ENCODE measurements at regions of chr11 and their contacts with region 1.

Region 1: GRCh38 chr11:57456960-57457642 is 3.2 kb upstream of the RTN4RL2 start:
- DNase-seq: peak; percentile 59 to 72 (median 62)
- H3K4me3 ChIP-seq: peak overlapping the region in 1 of 2 donors; percentile 3
- H3K4me3 Mint-ChIP-seq: peak overlapping the region; percentile 60 to 93 (median 70)
- H3K27ac ChIP-seq: no peak overlapping the region
- H3K27ac Mint-ChIP-seq: peak overlapping the region in 5 of 7 donors; percentile 32 to 83 (median 73)
- H3K4me1 ChIP-seq: peaks cover 40% of the 10 kb centered on the region
- H3K4me1 Mint-ChIP-seq: peaks cover 16 to 31% (median 24%) of the 10 kb centered on the region in 4 donors
- H3K27me3 ChIP-seq: peaks cover 17% of the 10 kb centered on the region
- H3K27me3 Mint-ChIP-seq: peaks cover 20 to 28% of the 10 kb centered on the region in 2 donors

Region 2: DNA sequence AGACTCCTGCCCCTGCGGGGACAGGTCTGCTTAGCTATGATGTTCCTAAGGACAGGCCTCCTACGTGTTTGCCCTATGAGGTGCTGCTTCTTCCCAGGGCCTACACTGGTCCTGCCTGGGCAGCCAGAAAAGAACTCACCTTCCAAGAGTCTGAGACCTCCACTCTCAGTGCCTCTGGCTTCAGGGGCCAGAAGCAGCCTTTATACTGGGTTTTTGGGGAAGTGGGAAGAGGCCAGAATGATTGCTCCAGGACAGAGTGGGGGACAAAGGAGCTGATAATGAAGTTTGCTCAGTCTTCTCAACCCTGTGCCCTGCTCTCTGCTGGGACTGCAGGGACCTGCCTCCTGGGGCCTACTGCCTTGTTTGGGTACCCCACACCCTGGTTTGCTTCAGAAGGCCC is 76.1 kb before region 1 on chr11 and contains the start of gene PRG3:
- CTCF ChIA-PET with region 1: no interaction called
- POLR2A ChIA-PET with region 1: no interaction called
- intact Hi-C with region 1: no loop called
- DNase-seq: no peak
- H3K4me3 ChIP-seq: no peak within 1 kb of the TSS
- H3K4me3 Mint-ChIP-seq: no peak within 1 kb of the TSS
- H3K27ac ChIP-seq: no peak within 1 kb of the TSS
- H3K27ac Mint-ChIP-seq: no peak within 1 kb of the TSS
- H3K4me1 ChIP-seq: no peaks in the 10 kb centered on the region
- H3K4me1 Mint-ChIP-seq: no peaks in the 10 kb centered on the region
- H3K27me3 ChIP-seq: no peaks in the 10 kb centered on the region
- H3K27me3 Mint-ChIP-seq: peaks cover 12 to 22% of the 10 kb centered on the region in 2 donors
- total RNA-seq, gene PRG3: not detected

Region 3: DNA sequence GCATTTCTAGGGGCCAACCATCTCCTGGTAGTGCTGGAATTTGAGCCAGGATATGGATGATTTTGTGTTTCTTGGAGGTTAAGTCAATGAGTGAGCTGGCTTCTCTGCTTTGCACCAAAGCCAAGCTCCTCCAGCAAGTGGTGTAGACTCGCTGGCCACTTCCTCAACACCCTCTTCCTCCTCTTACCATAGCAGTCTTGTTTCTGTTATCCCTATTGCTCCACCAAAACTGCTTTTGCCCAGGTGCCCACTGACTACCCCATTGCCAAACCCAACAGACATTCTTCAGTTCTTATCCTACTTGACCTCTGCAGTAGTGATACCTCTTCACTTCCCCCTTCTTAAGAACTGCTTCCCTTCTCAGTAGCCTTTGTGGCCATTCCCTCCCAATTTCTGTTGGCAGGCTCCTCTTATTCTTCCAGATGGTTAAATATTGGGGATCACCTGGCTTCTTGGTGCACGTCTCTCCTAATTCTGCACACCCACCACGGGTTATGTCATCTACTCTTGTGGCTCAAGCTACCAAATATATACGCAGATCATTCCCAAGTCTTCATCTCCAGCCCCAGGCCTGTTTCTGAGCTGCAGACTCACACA is 59.6 kb before region 1 on chr11:
- CTCF ChIA-PET with region 1: interaction called, 10 read pairs
- POLR2A ChIA-PET with region 1: no interaction called
- intact Hi-C with region 1: no loop called
- DNase-seq: no peak
- H3K4me3 ChIP-seq: no peak overlapping the region
- H3K4me3 Mint-ChIP-seq: no peak overlapping the region
- H3K27ac ChIP-seq: no peak overlapping the region
- H3K27ac Mint-ChIP-seq: no peak overlapping the region
- H3K4me1 ChIP-seq: no peaks in the 10 kb centered on the region
- H3K4me1 Mint-ChIP-seq: no peaks in the 10 kb centered on the region
- H3K27me3 ChIP-seq: no peaks in the 10 kb centered on the region
- H3K27me3 Mint-ChIP-seq: no peaks in the 10 kb centered on the region

Region 4: DNA sequence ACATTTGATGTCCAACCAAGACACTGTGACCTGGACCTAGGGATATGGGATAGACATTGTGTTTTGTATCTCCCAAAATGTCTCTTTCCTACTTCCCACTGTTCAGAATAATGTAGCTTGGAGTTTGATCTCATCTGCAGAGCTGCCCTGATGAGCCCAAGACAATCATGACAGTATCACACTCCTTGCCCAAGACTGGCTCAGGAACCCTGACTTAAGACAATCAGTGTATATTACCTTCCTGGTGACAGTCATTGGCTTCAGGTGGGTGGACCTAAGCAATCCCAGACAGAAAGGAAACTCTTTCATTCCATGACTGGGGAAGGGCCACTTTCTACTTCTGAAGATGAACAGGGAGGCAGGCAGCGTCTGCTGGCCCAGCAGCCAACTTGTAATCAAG is 11.0 kb before region 1 on chr11:
- CTCF ChIA-PET with region 1: interaction called, 22 read pairs
- POLR2A ChIA-PET with region 1: interaction called, 3 read pairs
- intact Hi-C with region 1: no loop called
- DNase-seq: no peak
- H3K4me3 ChIP-seq: no peak overlapping the region
- H3K4me3 Mint-ChIP-seq: no peak overlapping the region
- H3K27ac ChIP-seq: no peak overlapping the region
- H3K27ac Mint-ChIP-seq: no peak overlapping the region
- H3K4me1 ChIP-seq: no peaks in the 10 kb centered on the region
- H3K4me1 Mint-ChIP-seq: peaks cover 0 to 1% (median 0%) of the 10 kb centered on the region in 4 donors
- H3K27me3 ChIP-seq: no peaks in the 10 kb centered on the region
- H3K27me3 Mint-ChIP-seq: peaks cover 9 to 14% of the 10 kb centered on the region in 2 donors

Region 5: DNA sequence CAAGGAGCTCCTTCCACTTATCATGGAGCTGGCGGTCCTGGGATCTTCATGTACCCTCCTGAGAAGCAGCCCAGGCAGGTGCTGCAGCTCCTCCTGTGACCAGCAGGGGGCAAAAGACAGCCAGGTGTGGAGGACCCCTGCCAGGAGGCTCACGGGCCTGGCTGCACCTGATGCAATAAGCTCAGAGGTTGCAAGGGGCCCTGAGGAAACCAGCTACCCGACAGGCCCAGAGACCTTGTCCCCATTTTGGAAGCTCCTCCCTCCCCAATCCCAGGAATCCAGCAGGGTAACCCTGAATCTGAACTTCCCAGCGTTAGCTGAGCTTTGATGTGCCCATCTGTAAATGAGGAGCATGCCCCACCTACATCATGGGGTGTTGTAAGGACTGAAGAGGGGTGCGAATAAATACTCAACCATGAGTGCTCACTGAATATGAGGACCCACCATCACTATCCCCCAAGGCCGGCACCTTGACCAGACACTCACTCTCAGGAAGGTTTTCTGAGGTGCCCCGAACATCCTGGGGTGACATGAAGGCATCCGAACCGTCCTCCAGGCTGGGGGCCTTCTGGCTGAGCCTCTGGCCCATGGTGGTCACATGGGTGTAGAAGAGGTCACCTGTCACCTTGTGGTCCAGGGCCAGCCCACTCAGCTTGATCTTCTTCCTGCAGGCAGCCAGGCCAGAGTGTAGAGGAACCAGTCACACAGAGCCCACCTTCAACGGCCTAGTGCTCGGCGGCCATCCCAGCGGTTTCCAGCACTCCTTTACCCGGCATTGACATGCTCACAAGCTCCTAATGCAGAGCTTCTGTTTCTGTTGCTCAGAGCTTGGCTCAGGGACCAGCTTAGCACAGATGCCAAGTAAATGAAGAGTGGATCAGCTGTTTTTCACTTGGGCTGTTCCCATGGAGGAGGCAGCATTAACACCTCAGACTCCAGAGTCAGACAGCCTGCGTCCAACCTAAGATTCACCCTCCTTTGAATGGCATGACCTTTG is 36.7 kb after region 1 on chr11:
- CTCF ChIA-PET with region 1: interaction called, 57 read pairs
- POLR2A ChIA-PET with region 1: no interaction called
- intact Hi-C with region 1: loop called (anchors 5 kb)
- DNase-seq: peak; percentile 64 to 74 (median 67)
- H3K4me3 ChIP-seq: no peak overlapping the region
- H3K4me3 Mint-ChIP-seq: no peak overlapping the region
- H3K27ac ChIP-seq: no peak overlapping the region
- H3K27ac Mint-ChIP-seq: no peak overlapping the region
- H3K4me1 ChIP-seq: no peaks in the 10 kb centered on the region
- H3K4me1 Mint-ChIP-seq: no peaks in the 10 kb centered on the region
- H3K27me3 ChIP-seq: no peaks in the 10 kb centered on the region
- H3K27me3 Mint-ChIP-seq: no peaks in the 10 kb centered on the region

Region 6: GRCh38 chr11:57644748-57645688 is 187.9 kb after region 1 on chr11:
- CTCF ChIA-PET with region 1: interaction called, 58 read pairs
- POLR2A ChIA-PET with region 1: interaction called, 3 read pairs
- intact Hi-C with region 1: loop called (anchors 1 kb)
- DNase-seq: peak; percentile 82 to 89 (median 86)
- H3K4me3 ChIP-seq: no peak overlapping the region
- H3K4me3 Mint-ChIP-seq: peak overlapping the region in 1 of 8 donors; percentile 67
- H3K27ac ChIP-seq: no peak overlapping the region
- H3K27ac Mint-ChIP-seq: peak overlapping the region in 2 of 7 donors; percentile 62 to 69
- H3K4me1 ChIP-seq: peaks cover 17% of the 10 kb centered on the region
- H3K4me1 Mint-ChIP-seq: peaks cover 18 to 38% (median 28%) of the 10 kb centered on the region in 4 donors
- H3K27me3 ChIP-seq: peaks cover 37% of the 10 kb centered on the region
- H3K27me3 Mint-ChIP-seq: peaks cover 31 to 50% of the 10 kb centered on the region in 2 donors

Measured in CD4-positive, alpha-beta memory T cell (primary cell).